ENCODE measurements at regions of chr12 and their contacts with region 1.

Region 1: DNA sequence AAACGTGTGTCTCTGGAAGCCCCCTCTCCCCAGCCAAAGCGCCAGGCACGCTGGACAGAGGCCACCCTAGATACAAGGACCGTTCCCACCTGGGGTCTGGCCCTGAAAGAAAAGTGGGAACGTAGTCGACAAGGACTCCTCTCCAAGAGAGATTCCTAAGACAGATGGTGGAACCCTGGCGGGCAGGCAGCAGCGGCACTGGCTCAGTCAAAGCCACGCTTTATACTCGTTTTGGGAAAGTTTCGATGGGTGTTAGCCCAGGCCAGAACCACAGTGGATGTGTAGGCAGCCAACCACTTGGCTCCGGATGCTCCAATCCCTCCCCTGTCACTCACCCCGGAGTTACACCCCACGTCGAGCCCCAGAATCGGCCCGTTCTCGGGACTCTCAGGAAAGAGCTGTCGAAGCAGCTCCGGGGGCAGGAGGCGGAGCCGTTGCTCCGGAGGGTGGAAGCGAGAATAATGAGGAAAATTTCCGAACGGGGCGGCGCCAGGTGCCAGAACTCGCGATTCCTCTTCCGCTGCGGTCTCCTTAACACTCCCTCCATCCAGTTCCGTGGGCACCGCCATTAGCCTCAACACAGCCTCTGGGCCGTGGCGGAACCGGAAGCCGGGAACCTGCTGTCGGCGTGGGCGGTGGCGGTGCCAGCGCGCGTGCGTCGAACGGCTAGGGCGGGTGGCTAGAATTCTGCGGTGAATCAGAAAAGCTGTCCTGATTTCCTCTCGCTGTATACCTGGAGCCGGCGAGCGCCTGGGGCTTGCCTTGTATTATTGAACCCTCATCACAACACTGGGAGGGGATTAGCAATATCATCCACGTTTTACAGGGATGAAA is at the start of gene BCDIN3D:
- DNase-seq: peak; percentile 77 to 96 (median 92)
- ATAC-seq: peak; percentile 91
- H3K4me3 ChIP-seq: peak within 1 kb of the TSS; percentile 87 to 91
- H3K4me3 Mint-ChIP-seq: peak within 1 kb of the TSS; percentile 94
- H3K27ac ChIP-seq: peak within 1 kb of the TSS; percentile 71 to 77
- H3K27ac Mint-ChIP-seq: peak within 1 kb of the TSS; percentile 98
- H3K4me1 ChIP-seq: peaks cover 25% of the 10 kb centered on the region
- H3K4me1 Mint-ChIP-seq: peaks cover 33% of the 10 kb centered on the region
- H3K27me3 ChIP-seq: no peaks in the 10 kb centered on the region
- H3K27me3 Mint-ChIP-seq: no peaks in the 10 kb centered on the region
- CTCF ChIP-seq: no peak
- total RNA-seq, gene BCDIN3D: 4.2 to 5.9 TPM

Region 2: DNA sequence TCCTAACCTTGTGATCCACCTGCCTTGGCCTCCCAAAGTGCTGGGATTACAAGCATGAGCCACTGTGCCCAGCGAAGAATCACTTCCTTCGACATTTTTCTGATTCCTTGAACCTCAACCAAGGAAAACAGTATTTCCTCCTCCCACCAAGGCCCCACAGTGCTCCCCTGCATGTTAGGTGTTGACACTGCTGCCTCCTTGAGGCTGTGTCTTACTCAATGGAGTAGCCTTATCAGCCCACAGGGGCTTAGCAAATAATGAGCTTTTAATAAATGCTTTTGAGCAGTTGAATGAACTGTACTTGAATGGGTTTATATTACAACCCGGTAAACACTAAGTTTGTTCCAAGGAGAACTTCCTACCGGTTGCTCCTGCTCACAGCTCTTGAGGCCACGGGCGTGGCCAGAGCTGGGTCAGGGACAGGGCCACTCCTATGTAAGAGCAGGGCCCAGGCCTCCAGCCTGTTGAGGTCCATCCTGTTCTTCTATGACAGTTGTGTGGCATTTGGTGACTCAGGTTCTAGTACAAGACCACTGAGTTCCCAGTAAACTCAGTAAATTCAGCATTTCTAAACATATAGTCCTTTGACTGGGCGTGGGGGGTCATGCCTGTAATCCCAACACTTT is 617.1 kb before region 1 on chr12:
- CTCF ChIA-PET with region 1: no interaction called
- POLR2A ChIA-PET with region 1: no interaction called
- intact Hi-C with region 1: no loop called
- DNase-seq: no peak
- ATAC-seq: no peak
- H3K4me3 ChIP-seq: no peak overlapping the region
- H3K4me3 Mint-ChIP-seq: no peak overlapping the region
- H3K27ac ChIP-seq: no peak overlapping the region
- H3K27ac Mint-ChIP-seq: no peak overlapping the region
- H3K4me1 ChIP-seq: no peaks in the 10 kb centered on the region
- H3K4me1 Mint-ChIP-seq: no peaks in the 10 kb centered on the region
- H3K27me3 ChIP-seq: no peaks in the 10 kb centered on the region
- H3K27me3 Mint-ChIP-seq: no peaks in the 10 kb centered on the region
- CTCF ChIP-seq: no peak

Region 3: GRCh38 chr12:49567611-49568441 is 274.9 kb before region 1 on chr12 and contains the start of gene MCRS1:
- CTCF ChIA-PET with region 1: no interaction called
- POLR2A ChIA-PET with region 1: no interaction called
- intact Hi-C with region 1: loop called in 1 of 2 experiments (anchors 2 kb)
- DNase-seq: peak; percentile 74 to 96 (median 91)
- ATAC-seq: peak; percentile 85
- H3K4me3 ChIP-seq: peak within 1 kb of the TSS; percentile 80 to 89
- H3K4me3 Mint-ChIP-seq: peak within 1 kb of the TSS; percentile 99
- H3K27ac ChIP-seq: peak within 1 kb of the TSS; percentile 93 to 98
- H3K27ac Mint-ChIP-seq: peak within 1 kb of the TSS; percentile 100
- H3K4me1 ChIP-seq: peaks cover 59% of the 10 kb centered on the region
- H3K4me1 Mint-ChIP-seq: peaks cover 63% of the 10 kb centered on the region
- H3K27me3 ChIP-seq: no peaks in the 10 kb centered on the region
- H3K27me3 Mint-ChIP-seq: no peaks in the 10 kb centered on the region
- CTCF ChIP-seq: no peak
- total RNA-seq, gene MCRS1: 63.7 to 70.9 TPM

Region 4: GRCh38 chr12:49644620-49644994 is 198.1 kb before region 1 on chr12:
- CTCF ChIA-PET with region 1: interaction called, 13 read pairs
- POLR2A ChIA-PET with region 1: no interaction called
- intact Hi-C with region 1: loop called in 1 of 2 experiments (anchors 5 kb)
- DNase-seq: peak; percentile 71 to 91 (median 87)
- ATAC-seq: peak; percentile 98
- H3K4me3 ChIP-seq: no peak overlapping the region
- H3K4me3 Mint-ChIP-seq: no peak overlapping the region
- H3K27ac ChIP-seq: peak overlapping the region in 1 of 2 experiments; percentile 57
- H3K27ac Mint-ChIP-seq: peak overlapping the region; percentile 92
- H3K4me1 ChIP-seq: peaks cover 12% of the 10 kb centered on the region
- H3K4me1 Mint-ChIP-seq: peaks cover 35% of the 10 kb centered on the region
- H3K27me3 ChIP-seq: no peaks in the 10 kb centered on the region
- H3K27me3 Mint-ChIP-seq: no peaks in the 10 kb centered on the region
- CTCF ChIP-seq: peak; percentile 93

Region 5: GRCh38 chr12:49776413-49776812 is 66.3 kb before region 1 on chr12:
- CTCF ChIA-PET with region 1: interaction called, 64 read pairs
- POLR2A ChIA-PET with region 1: no interaction called
- intact Hi-C with region 1: loop called (anchors 1 kb)
- DNase-seq: peak in 8 of 9 experiments; percentile 20 to 72 (median 48)
- ATAC-seq: peak; percentile 74
- H3K4me3 ChIP-seq: no peak overlapping the region
- H3K4me3 Mint-ChIP-seq: no peak overlapping the region
- H3K27ac ChIP-seq: no peak overlapping the region
- H3K27ac Mint-ChIP-seq: no peak overlapping the region
- H3K4me1 ChIP-seq: peaks cover 10% of the 10 kb centered on the region
- H3K4me1 Mint-ChIP-seq: peaks cover 16% of the 10 kb centered on the region
- H3K27me3 ChIP-seq: no peaks in the 10 kb centered on the region
- H3K27me3 Mint-ChIP-seq: peaks cover 24% of the 10 kb centered on the region
- CTCF ChIP-seq: peak; percentile 55

Region 6: DNA sequence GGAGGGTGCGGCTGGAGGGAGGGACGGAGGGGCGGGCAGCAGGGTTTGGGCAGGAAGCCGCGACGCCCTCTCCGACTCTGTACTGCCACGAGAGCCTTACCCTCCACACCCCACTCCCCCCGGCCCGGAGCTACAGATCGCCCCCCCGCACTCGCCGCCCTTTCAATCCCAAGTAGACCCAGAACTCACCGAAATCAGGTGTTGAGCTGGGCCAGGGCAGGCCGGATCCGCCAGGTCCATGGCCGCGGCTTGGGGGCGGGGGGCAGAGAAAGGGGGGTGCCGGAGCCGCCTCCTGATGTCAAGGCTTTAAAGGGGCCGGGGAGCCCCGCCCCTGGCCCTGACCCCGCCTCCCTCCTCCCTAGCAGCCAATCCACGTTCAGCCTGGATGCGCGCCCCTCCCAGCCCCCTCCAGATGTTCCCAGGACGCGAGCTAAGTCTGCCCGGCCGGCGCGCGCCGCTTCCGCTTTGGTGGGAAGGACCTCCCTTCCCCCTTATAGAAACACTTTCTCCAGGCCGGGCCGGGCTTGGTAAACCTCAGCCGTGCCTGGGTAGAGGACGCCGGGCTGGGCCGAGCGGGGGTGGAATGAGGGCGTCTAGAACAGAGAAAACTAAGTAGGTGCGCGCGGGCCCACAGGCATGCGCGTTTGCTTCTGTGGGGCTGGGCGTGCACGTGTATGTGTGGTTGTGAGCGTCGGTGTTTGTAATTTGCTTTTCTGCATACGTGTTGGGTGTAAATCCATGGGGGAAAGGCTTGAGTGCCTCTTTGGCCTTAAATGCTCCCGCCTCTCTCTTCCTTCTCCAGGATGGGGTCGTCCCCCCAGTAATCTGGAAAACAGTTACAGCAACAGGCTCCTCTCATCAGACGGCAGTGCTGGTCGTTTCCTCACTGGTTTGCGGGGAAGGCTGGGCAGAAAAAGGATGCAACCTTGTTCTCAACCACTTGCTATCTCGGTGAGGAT is 14.3 kb before region 1 on chr12 and contains the start of gene NCKAP5L:
- CTCF ChIA-PET with region 1: interaction called, 45 read pairs
- POLR2A ChIA-PET with region 1: interaction called, 24 read pairs
- intact Hi-C with region 1: loop called (anchors 1 kb)
- DNase-seq: peak; percentile 86 to 96 (median 94)
- ATAC-seq: peak; percentile 97
- H3K4me3 ChIP-seq: peak within 1 kb of the TSS; percentile 68 to 91
- H3K4me3 Mint-ChIP-seq: peak within 1 kb of the TSS; percentile 97
- H3K27ac ChIP-seq: peak within 1 kb of the TSS; percentile 65 to 69
- H3K27ac Mint-ChIP-seq: peak within 1 kb of the TSS; percentile 97
- H3K4me1 ChIP-seq: peaks cover 15% of the 10 kb centered on the region
- H3K4me1 Mint-ChIP-seq: peaks cover 39% of the 10 kb centered on the region
- H3K27me3 ChIP-seq: no peaks in the 10 kb centered on the region
- H3K27me3 Mint-ChIP-seq: no peaks in the 10 kb centered on the region
- CTCF ChIP-seq: no peak
- total RNA-seq, gene NCKAP5L: 10.6 to 10.7 TPM

Region 7: GRCh38 chr12:50979369-50980052 is 1136.8 kb after region 1 on chr12:
- CTCF ChIA-PET with region 1: no interaction called
- POLR2A ChIA-PET with region 1: no interaction called
- intact Hi-C with region 1: no loop called
- DNase-seq: no peak
- ATAC-seq: no peak
- H3K4me3 ChIP-seq: no peak overlapping the region
- H3K4me3 Mint-ChIP-seq: no peak overlapping the region
- H3K27ac ChIP-seq: no peak overlapping the region
- H3K27ac Mint-ChIP-seq: no peak overlapping the region
- H3K4me1 ChIP-seq: no peaks in the 10 kb centered on the region
- H3K4me1 Mint-ChIP-seq: no peaks in the 10 kb centered on the region
- H3K27me3 ChIP-seq: no peaks in the 10 kb centered on the region
- H3K27me3 Mint-ChIP-seq: no peaks in the 10 kb centered on the region
- CTCF ChIP-seq: no peak